GM12878 (cell line): ENCODE measurements at regions of chr1 and their contacts with region 1.

Region 1: DNA sequence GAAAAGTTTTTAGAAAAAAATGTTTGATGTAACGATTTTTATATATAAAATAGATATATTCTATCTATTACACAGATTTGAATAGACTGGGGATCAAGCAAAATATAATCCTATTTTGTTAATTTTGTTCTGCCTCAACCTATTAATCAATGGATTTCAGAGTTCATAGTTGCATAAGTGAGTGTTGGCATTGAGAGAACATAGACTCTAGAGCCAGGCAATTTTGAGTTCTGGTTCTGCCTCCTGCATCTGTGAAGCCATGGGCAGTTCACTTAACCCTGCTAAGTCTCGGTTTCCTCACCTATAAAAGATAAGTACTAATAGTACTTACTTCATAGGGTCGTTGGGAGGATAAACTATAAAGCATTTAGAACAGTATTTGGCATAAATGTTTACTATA is 13.6 kb upstream of the PKN2 start:
- DNase-seq: no peak
- ATAC-seq: no peak
- H3K4me3 ChIP-seq: no peak overlapping the region
- H3K27ac ChIP-seq: no peak overlapping the region
- H3K4me1 ChIP-seq: no peaks in the 10 kb centered on the region
- H3K27me3 ChIP-seq: no peaks in the 10 kb centered on the region
- CTCF ChIP-seq: no peak
- EP300 ChIP-seq: no peak
- POLR2A ChIP-seq: no peak
- RAD21 ChIP-seq: no peak

Region 2: DNA sequence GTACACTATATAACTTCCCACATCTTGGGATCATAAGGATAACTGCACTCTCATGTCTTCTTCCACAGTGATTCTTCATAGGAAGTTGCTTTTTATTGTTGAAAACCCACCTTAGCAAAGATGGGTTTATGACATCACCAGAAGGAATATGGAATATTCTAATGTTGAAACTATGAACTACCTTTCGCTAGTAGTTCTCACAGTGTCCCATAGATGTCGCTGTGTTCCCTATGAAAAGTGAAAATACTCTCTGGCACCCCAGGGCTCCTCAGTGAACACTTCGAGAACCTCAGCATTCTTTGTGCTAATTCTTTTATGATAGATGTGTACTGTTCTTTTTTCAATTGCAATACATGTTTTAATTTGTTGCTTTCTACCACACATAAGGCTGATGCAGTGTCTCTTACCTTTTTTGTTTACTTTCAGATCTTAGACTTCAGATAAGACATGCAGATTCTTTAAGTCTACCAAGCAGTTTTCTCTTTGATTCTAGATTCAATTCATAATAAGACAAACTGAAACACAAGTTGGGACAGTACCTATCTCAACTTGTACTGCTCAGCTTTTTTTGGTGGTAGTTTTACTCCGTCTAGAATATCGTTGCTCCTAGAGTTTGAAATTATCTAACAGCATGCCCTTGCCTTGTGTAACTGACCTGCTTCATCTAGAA is 130.1 kb after region 1 on chr1:
- CTCF ChIA-PET with region 1: no interaction called
- POLR2A ChIA-PET with region 1: no interaction called
- RAD21 ChIA-PET with region 1: no interaction called
- SMC1A ChIA-PET with region 1: no interaction called
- in situ Hi-C with region 1: no loop called
- intact Hi-C with region 1: no loop called
- DNase-seq: no peak
- ATAC-seq: peak; percentile 34; the same call in 1 of the 3 replicates
- H3K4me3 ChIP-seq: no peak overlapping the region
- H3K27ac ChIP-seq: no peak overlapping the region
- H3K4me1 ChIP-seq: no peaks in the 10 kb centered on the region
- H3K27me3 ChIP-seq: no peaks in the 10 kb centered on the region
- CTCF ChIP-seq: peak in 2 of 3 experiments; percentile 27 to 40; a peak in 3 of 6 replicates
- EP300 ChIP-seq: no peak
- POLR2A ChIP-seq: no peak
- RAD21 ChIP-seq: no peak

Region 3: DNA sequence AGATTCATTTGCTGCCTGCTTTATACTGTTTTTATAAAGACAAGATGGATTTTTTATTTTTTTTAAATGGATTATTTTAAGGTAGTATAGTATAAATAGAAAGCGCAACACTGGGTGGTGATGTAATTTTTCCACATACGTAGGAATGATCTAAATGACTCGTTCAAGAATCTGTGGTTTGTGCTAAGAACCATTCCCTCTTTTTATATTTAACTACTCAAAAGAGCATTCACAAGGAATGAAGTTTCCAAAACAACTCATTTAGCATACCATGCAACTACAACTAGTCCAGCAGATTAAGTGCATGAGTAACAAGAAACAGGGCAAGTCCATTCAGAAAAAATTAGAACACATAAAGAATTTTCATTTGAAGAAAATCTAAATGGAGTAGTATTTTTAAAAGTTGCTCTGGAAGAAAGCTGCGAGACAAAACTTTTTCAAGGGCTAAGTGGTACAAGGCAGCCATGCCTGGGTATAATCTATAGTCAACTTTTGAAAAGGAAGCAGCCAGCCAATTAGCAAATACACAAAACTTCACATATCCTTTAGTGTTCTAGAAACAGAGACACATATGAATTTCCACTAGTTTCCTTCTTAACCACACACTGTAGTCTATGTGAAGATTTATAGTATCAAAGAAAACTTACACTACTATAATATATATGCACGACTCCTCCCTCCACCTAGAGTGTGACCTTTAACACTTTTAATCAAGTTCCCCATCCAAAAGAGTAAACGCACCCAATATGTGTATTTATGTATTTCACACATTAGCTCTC is 197.5 kb after region 1 on chr1:
- CTCF ChIA-PET with region 1: no interaction called
- POLR2A ChIA-PET with region 1: no interaction called
- RAD21 ChIA-PET with region 1: no interaction called
- SMC1A ChIA-PET with region 1: interaction called, 3 read pairs
- in situ Hi-C with region 1: loop called (anchors 5 kb)
- intact Hi-C with region 1: no loop called
- DNase-seq: no peak
- ATAC-seq: peak; percentile 73
- H3K4me3 ChIP-seq: no peak overlapping the region
- H3K27ac ChIP-seq: peak overlapping the region; percentile 17; the same call in 1 of the 2 replicates
- H3K4me1 ChIP-seq: peaks cover 4% of the 10 kb centered on the region; the same call in 1 of the 2 replicates
- H3K27me3 ChIP-seq: no peaks in the 10 kb centered on the region
- CTCF ChIP-seq: no peak
- EP300 ChIP-seq: no peak
- POLR2A ChIP-seq: no peak
- RAD21 ChIP-seq: no peak